ENCODE measurements at regions of chr10 and their contacts with region 1.

Region 1: GRCh38 chr10:126080879-126081411 is 184.6 kb downstream of the FANK1 start:
- DNase-seq: no peak
- H3K4me3 ChIP-seq: no peak overlapping the region
- H3K27ac ChIP-seq: peak overlapping the region; percentile 61 to 75
- H3K4me1 ChIP-seq: peaks cover 0 to 7% of the 10 kb centered on the region in 2 donors
- H3K27me3 ChIP-seq: no peaks in the 10 kb centered on the region
- CTCF ChIP-seq: no peak
- POLR2A ChIP-seq: no peak

Region 2: GRCh38 chr10:125565046-125565445 is 515.9 kb before region 1 on chr10:
- intact Hi-C with region 1: no loop called
- DNase-seq: no peak
- H3K4me3 ChIP-seq: no peak overlapping the region
- H3K27ac ChIP-seq: no peak overlapping the region
- H3K4me1 ChIP-seq: no peaks in the 10 kb centered on the region
- H3K27me3 ChIP-seq: no peaks in the 10 kb centered on the region
- CTCF ChIP-seq: no peak
- POLR2A ChIP-seq: no peak

Region 3: GRCh38 chr10:126090911-126091728 is 10.2 kb after region 1 on chr10:
- intact Hi-C with region 1: loop called (anchors 1 kb)
- DNase-seq: no peak
- H3K4me3 ChIP-seq: no peak overlapping the region
- H3K27ac ChIP-seq: peak overlapping the region in 1 of 2 donors; percentile 25
- H3K4me1 ChIP-seq: no peaks in the 10 kb centered on the region
- H3K27me3 ChIP-seq: no peaks in the 10 kb centered on the region
- CTCF ChIP-seq: no peak
- POLR2A ChIP-seq: no peak

Measured in breast epithelium (tissue), 4 donors.